Heart right ventricle (tissue), 16 donors: ENCODE measurements at regions of chr12 and their contacts with region 1.

Region 1: DNA sequence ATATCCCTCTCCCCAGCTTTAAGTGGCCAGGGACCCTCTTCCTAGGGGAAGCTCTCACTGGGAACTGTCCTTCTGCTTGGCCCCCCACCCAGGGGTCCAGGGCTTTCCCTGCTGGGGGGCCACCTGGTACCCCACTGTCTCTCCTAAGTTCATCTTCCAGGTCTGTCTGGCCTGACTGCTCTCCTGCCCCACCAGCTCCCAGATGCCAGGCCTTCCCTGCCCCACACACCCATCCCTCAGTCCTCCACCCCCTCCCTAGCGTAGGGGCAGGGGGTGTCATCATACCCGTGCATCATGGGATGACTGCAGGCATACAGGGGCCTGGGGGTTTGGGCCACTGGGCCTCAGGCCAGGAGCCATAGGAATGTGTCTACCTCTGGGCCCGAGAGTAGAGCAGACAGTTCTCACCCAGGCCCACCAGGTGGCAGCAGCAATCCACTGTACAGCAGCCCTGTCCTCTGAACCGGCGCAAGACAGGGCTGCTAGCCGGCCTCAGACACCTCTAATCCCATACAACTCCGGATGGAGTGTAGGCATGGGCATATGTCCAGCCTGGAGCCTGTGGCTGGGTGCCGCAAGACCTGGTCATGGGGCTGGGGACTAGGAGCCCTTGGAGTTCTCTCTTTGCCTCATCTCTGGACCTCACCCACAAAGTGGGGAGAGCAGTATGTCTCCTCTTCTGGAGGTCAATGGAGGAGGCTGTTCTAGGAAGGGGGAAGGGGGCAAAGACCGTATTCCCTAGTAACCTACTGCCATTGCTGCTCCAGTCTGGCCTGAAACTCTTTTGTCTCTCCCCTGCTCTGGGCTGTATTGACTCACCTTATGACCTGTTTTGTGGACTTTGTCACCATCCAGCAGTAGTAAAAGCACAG is 10.0 kb upstream of the SMARCD1 start:
- DNase-seq: peak; percentile 84 to 85
- ATAC-seq: peak; percentile 84 to 92 (median 88)
- H3K4me3 ChIP-seq: no peak overlapping the region
- H3K27ac ChIP-seq: no peak overlapping the region
- H3K4me1 ChIP-seq: peaks cover 3 to 13% (median 6%) of the 10 kb centered on the region in 9 donors
- H3K27me3 ChIP-seq: no peaks in the 10 kb centered on the region
- CTCF ChIP-seq: peak; percentile 76 to 97 (median 94)

Region 2: DNA sequence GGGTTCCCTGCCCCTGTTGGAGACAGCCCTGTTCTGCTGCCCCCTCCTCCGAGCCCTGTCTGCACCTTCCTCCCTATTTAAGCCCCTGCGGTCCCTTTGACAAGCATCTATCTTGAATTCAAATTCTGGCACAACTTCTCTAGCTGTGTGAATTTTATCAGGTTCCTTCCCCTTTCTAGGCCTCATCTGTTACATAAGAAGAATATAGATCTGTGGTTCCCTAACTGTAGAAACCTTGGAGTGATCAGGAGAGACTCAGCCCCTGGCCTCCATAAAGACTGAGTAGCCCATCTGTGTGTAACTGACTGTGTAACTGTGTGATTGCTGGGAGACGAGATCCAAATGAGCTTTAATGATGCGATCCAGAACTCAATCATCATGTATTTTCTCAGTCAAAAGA is 36.8 kb before region 1 on chr12:
- intact Hi-C with region 1: loop called in 1 of 10 experiments (anchors 5 kb)
- DNase-seq: no peak
- ATAC-seq: no peak
- H3K4me3 ChIP-seq: no peak overlapping the region
- H3K27ac ChIP-seq: no peak overlapping the region
- H3K4me1 ChIP-seq: peaks cover 0 to 9% (median 0%) of the 10 kb centered on the region in 9 donors
- H3K27me3 ChIP-seq: peaks cover 0 to 27% (median 9%) of the 10 kb centered on the region in 7 donors
- CTCF ChIP-seq: no peak

Region 3: GRCh38 chr12:50127546-50127945 is 52.4 kb after region 1 on chr12:
- intact Hi-C with region 1: no loop called
- DNase-seq: no peak
- ATAC-seq: peak in 5 of 8 donors; percentile 41 to 78 (median 69)
- H3K4me3 ChIP-seq: no peak overlapping the region
- H3K27ac ChIP-seq: no peak overlapping the region
- H3K4me1 ChIP-seq: peaks cover 0 to 45% (median 15%) of the 10 kb centered on the region in 9 donors
- H3K27me3 ChIP-seq: no peaks in the 10 kb centered on the region
- CTCF ChIP-seq: no peak